Calu3 (cell line): ENCODE measurements at regions of chr11 and their contacts with region 1.

Region 1: DNA sequence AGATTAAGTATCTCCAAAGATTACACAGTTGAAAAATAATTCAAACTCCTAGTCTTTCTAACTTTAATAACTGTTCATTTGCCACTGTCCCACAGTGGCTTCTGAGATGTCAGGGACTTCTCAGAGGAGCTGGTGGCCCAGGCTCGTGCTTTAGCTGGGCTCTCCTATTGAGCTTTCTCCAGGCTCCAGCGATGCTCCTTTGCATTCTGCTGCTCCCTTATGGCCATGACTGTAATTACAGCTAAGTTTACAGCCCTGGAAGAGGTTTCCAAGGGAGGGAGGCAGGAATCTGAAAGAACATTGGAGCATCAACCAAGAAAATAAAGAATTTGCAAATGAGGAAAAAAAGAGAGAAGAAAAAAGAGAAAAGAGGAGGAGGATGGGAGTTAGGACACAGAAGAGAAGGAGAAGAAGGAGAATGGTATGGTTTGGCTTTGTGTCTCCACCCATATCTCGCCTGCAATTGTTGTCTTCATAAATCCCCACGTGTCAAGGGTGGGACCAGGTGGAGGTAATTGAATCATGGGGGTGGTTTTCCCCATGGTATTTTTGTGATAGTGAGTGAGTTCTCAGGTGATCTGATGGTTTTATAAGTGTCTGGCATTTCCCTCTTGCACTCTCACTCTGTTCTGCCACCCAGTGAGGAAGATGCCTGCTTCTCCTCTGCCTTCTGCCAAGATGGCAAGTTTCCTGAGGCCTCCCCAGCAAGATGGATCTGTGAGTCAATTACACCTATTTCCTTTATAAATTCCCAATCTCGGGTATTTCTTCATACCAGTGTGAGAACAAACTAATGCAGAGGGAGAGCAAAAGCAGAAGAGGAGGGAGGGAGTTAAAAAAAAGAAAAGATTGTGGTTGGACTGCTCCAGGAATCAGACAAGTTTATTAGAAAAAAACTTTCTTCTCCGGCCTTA is 857.0 kb downstream of the KCNA4 start:
- DNase-seq: peak; percentile 71
- H3K4me3 Mint-ChIP-seq: no peak overlapping the region
- H3K27ac Mint-ChIP-seq: no peak overlapping the region
- H3K4me1 Mint-ChIP-seq: peaks cover 15% of the 10 kb centered on the region
- H3K27me3 Mint-ChIP-seq: no peaks in the 10 kb centered on the region
- CTCF ChIP-seq: peak; percentile 78

Region 2: DNA sequence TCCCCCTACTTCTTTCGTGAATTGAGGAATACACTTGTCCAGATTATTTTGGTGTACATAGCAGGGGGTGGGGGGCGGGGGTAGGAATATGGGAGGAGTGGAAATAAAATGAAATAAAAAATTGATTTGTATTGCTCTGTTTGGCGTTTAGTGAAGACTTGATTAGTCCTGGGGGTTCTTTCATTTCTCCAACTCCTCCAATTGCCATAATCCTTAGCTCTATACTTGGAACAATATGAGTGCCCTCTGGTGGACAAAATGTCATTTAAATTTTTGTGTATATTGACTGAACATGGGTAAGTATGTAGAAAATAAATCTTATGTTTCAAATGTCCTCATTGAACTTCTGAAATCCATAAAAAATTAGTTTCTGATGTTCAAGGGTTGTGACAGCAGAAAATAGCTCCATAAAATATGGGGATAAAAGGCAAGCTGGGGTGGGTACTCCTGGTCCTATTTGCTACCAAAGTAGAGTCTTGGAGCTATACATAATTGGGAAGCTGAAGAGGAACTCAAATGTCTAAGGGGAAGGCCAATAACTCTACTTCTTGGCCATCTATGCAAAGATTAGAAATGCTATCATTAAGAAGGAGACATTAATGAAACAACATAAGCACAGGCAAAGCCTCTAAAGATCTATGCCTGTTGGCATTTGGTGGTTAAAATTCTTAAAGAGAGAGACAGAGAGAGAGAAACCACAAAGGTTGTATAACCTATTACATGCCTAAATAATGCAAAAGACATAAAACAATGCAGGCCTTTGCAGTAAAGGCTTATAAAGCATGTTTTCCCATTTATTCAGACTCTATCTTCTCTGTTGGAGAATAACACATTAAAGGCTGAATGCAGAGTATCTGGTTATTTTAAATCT is 630.0 kb before region 1 on chr11:
- CTCF ChIA-PET with region 1: interaction called, 11 read pairs
- intact Hi-C with region 1: no loop called
- DNase-seq: peak; percentile 22
- H3K4me3 Mint-ChIP-seq: no peak overlapping the region
- H3K27ac Mint-ChIP-seq: no peak overlapping the region
- H3K4me1 Mint-ChIP-seq: no peaks in the 10 kb centered on the region
- H3K27me3 Mint-ChIP-seq: no peaks in the 10 kb centered on the region
- CTCF ChIP-seq: peak; percentile 10

Region 3: GRCh38 chr11:28836285-28837081 is 323.3 kb before region 1 on chr11:
- CTCF ChIA-PET with region 1: interaction called, 11 read pairs
- intact Hi-C with region 1: loop called (anchors 1 kb)
- DNase-seq: peak; percentile 60
- H3K4me3 Mint-ChIP-seq: peak overlapping the region; percentile 59
- H3K27ac Mint-ChIP-seq: peak overlapping the region; percentile 96
- H3K4me1 Mint-ChIP-seq: peaks cover 55% of the 10 kb centered on the region
- H3K27me3 Mint-ChIP-seq: no peaks in the 10 kb centered on the region
- CTCF ChIP-seq: no peak

Region 4: GRCh38 chr11:28981381-28981780 is 178.4 kb before region 1 on chr11:
- CTCF ChIA-PET with region 1: no interaction called
- intact Hi-C with region 1: no loop called
- DNase-seq: no peak
- H3K4me3 Mint-ChIP-seq: no peak overlapping the region
- H3K27ac Mint-ChIP-seq: no peak overlapping the region
- H3K4me1 Mint-ChIP-seq: peaks cover 11% of the 10 kb centered on the region
- H3K27me3 Mint-ChIP-seq: no peaks in the 10 kb centered on the region
- CTCF ChIP-seq: no peak

Region 5: GRCh38 chr11:29255401-29255800 is 95.6 kb after region 1 on chr11:
- CTCF ChIA-PET with region 1: no interaction called
- intact Hi-C with region 1: no loop called
- DNase-seq: no peak
- H3K4me3 Mint-ChIP-seq: no peak overlapping the region
- H3K27ac Mint-ChIP-seq: no peak overlapping the region
- H3K4me1 Mint-ChIP-seq: peaks cover 2% of the 10 kb centered on the region
- H3K27me3 Mint-ChIP-seq: no peaks in the 10 kb centered on the region
- CTCF ChIP-seq: no peak